ENCODE measurements at regions of chr3 and their contacts with region 1.

Region 1: GRCh38 chr3:190617185-190617584 is 103.3 kb downstream of the IL1RAP start:
- DNase-seq: peak; percentile 69
- ATAC-seq: peak; percentile 48
- H3K4me3 Mint-ChIP-seq: no peak overlapping the region
- H3K27ac Mint-ChIP-seq: peak overlapping the region; percentile 91
- H3K4me1 Mint-ChIP-seq: peaks cover 66% of the 10 kb centered on the region
- H3K27me3 Mint-ChIP-seq: no peaks in the 10 kb centered on the region

Region 2: GRCh38 chr3:190306513-190307165 is 310.5 kb before region 1 on chr3:
- CTCF ChIA-PET with region 1: no interaction called
- POLR2A ChIA-PET with region 1: no interaction called
- intact Hi-C with region 1: loop called in 1 of 2 experiments (anchors 5 kb)
- DNase-seq: peak; percentile 53
- ATAC-seq: peak; percentile 94
- H3K4me3 Mint-ChIP-seq: peak overlapping the region; percentile 23
- H3K27ac Mint-ChIP-seq: peak overlapping the region; percentile 91
- H3K4me1 Mint-ChIP-seq: peaks cover 34% of the 10 kb centered on the region
- H3K27me3 Mint-ChIP-seq: peaks cover 6% of the 10 kb centered on the region

Region 3: GRCh38 chr3:190533511-190534277 is 83.5 kb before region 1 on chr3:
- CTCF ChIA-PET with region 1: no interaction called
- POLR2A ChIA-PET with region 1: no interaction called
- intact Hi-C with region 1: no loop called
- DNase-seq: no peak
- ATAC-seq: no peak
- H3K4me3 Mint-ChIP-seq: no peak overlapping the region
- H3K27ac Mint-ChIP-seq: no peak overlapping the region
- H3K4me1 Mint-ChIP-seq: peaks cover 36% of the 10 kb centered on the region
- H3K27me3 Mint-ChIP-seq: no peaks in the 10 kb centered on the region

Region 4: GRCh38 chr3:190566043-190566933 is 50.9 kb before region 1 on chr3:
- CTCF ChIA-PET with region 1: interaction called, 10 read pairs
- POLR2A ChIA-PET with region 1: interaction called, 7 read pairs
- intact Hi-C with region 1: loop called (anchors 1 kb)
- DNase-seq: peak; percentile 92
- ATAC-seq: peak; percentile 88
- H3K4me3 Mint-ChIP-seq: no peak overlapping the region
- H3K27ac Mint-ChIP-seq: peak overlapping the region; percentile 97
- H3K4me1 Mint-ChIP-seq: peaks cover 61% of the 10 kb centered on the region
- H3K27me3 Mint-ChIP-seq: no peaks in the 10 kb centered on the region

Region 5: GRCh38 chr3:190585805-190586630 is 31.2 kb before region 1 on chr3:
- CTCF ChIA-PET with region 1: interaction called, 4 read pairs
- POLR2A ChIA-PET with region 1: no interaction called
- intact Hi-C with region 1: loop called (anchors 1 kb)
- DNase-seq: peak; percentile 82
- ATAC-seq: peak; percentile 87
- H3K4me3 Mint-ChIP-seq: peak overlapping the region; percentile 51
- H3K27ac Mint-ChIP-seq: peak overlapping the region; percentile 96
- H3K4me1 Mint-ChIP-seq: peaks cover 41% of the 10 kb centered on the region
- H3K27me3 Mint-ChIP-seq: no peaks in the 10 kb centered on the region